ENCODE measurements at regions of chr14 and their contacts with region 1.

Region 1: GRCh38 chr14:74029136-74029535 is 10.0 kb downstream of the BBOF1 start:
- DNase-seq: no peak
- H3K4me3 ChIP-seq: no peak overlapping the region
- CTCF ChIP-seq: no peak
- POLR2A ChIP-seq: no peak

Region 2: GRCh38 chr14:73014105-73014504 is 1015.0 kb before region 1 on chr14:
- intact Hi-C with region 1: loop called (anchors 5 kb)
- DNase-seq: no peak
- H3K4me3 ChIP-seq: no peak overlapping the region
- CTCF ChIP-seq: no peak
- POLR2A ChIP-seq: no peak

Region 3: DNA sequence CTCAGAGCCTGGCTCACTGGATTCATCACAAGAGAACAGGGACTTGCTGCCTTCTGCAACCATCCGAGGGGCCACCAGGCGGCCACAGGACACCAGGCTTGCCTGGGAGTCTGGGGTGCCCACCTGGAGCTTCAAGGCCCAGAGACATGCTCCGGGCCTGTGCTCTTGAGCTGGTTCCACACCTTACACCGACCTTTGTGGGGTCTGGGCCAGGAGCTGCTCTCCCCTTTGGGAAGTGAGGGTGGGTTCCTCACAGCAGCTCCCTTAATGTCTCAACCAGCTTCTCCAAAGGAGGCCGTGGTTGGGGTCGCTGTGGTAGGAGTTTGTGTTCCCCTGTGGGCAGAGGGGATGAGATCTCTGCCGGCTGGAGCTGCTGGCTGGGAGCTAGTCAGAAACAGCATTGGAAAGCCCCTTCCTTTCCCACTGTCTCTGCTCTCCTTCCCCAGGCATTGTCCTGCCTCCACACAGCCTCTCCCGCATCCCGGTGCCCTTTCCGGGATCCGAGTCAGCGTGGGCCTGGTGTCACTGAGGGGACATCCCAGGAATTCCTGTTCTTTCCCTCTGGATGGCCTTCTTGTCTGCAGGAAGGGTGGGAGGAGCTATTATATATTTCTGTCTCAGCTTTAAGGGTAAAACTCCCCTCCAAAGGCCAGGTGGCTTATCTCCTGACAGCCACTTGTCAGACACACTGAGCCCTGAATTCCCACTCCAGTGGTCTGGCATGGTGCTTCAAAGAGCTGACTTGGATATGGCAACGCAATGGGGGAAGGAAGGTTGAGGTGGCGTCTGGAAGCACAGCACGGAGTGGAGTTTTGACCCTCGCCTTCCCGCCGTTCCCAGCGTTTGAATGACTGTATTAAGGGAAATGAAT is 796.9 kb before region 1 on chr14:
- intact Hi-C with region 1: no loop called
- DNase-seq: peak in 1 of 2 donors; percentile 79
- H3K4me3 ChIP-seq: no peak overlapping the region
- CTCF ChIP-seq: no peak
- POLR2A ChIP-seq: no peak

Region 4: DNA sequence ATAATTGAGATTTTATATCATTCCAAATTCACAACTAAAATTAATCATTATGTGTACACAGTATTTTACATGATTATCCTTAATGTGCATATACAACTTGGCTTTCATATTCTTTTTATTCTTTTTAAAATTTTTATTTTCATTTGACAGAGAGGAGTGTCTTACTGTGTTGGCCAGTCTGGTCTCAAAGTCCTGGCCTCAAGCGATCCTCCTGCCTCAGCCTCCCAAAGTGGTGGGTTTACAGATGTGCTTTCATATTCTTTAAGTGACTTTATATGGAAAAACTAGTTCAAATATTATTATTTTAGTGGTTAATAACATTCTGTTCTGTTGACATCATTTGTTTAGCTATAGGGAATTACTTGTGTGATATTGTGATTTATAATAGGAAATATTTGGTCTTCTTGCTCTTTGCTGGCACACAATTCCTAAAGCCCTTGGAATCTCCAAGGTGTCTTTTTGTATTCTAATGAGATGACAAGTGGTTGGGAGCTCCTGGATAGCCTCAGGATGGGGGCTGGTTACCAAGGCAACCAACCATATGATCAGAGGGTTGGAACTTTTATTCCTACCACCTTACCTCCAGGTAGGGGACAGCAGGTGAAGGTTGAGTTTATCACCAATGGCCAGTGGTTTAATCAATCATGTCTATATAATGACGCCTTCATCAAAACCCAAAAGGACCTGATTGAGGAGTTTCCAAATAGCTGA is 158.5 kb before region 1 on chr14:
- intact Hi-C with region 1: no loop called
- DNase-seq: no peak
- H3K4me3 ChIP-seq: no peak overlapping the region
- CTCF ChIP-seq: no peak
- POLR2A ChIP-seq: no peak

Region 5: GRCh38 chr14:73997108-73997943 is 31.8 kb before region 1 on chr14:
- intact Hi-C with region 1: no loop called
- DNase-seq: no peak
- H3K4me3 ChIP-seq: no peak overlapping the region
- CTCF ChIP-seq: no peak
- POLR2A ChIP-seq: no peak

Measured in lower leg skin (tissue), 4 donors.